CD14-positive monocyte (primary cell): ENCODE measurements at regions of chr10 and their contacts with region 1.

Region 1: GRCh38 chr10:11515596-11516430 is 95.6 kb downstream of the USP6NL start:
- DNase-seq: peak; percentile 53 to 72 (median 67)
- H3K4me3 ChIP-seq: no peak overlapping the region
- H3K4me3 Mint-ChIP-seq: no peak overlapping the region
- H3K27ac ChIP-seq: no peak overlapping the region
- H3K27ac Mint-ChIP-seq: no peak overlapping the region
- H3K4me1 ChIP-seq: no peaks in the 10 kb centered on the region
- H3K4me1 Mint-ChIP-seq: peaks cover 12% of the 10 kb centered on the region
- H3K27me3 ChIP-seq: no peaks in the 10 kb centered on the region
- H3K27me3 Mint-ChIP-seq: peaks cover 0 to 3% (median 3%) of the 10 kb centered on the region in 3 donors
- CTCF ChIP-seq: peak; percentile 86

Region 2: DNA sequence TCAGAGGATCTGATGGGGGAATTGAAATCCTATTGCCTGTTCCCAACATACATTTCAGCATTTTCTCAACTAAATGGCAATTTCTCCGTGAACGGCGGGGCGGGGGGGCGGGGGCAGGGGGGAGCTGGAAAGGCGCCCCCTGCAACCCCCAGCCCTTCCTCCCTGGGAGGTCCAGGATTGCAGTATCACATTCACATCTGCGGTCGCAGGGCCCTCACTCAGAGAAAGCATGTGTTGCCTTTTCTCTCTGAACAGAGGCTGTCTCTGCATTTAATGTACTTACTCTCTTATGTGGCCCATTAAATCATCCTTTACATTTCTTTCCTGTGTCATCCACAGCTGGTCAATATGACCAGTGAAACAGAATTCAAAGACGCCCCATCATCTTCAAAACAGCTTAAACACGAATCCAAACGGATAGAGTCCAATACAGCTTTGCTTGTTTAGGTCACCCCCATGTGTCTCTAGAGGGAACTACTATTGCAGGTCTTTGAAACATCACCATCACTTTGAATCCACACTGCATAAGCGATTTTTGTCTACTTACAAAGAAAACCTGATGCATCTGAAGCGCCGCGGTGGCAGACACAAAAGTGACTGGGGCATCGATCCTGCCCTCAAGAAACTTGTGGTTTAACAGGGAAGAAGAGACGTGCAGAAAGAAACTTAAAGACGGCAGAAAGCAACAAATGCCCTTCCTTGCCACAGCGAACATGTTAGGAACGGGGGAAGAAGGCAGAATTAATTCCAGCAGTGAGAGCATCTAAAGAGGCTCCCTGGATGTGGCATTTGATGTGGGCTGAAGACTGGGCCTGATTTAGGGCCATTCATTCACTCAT is 209.3 kb after region 1 on chr10:
- intact Hi-C with region 1: loop called (anchors 5 kb)
- DNase-seq: peak; percentile 27 to 47 (median 39)
- H3K4me3 ChIP-seq: no peak overlapping the region
- H3K4me3 Mint-ChIP-seq: no peak overlapping the region
- H3K27ac ChIP-seq: no peak overlapping the region
- H3K27ac Mint-ChIP-seq: no peak overlapping the region
- H3K4me1 ChIP-seq: peaks cover 12 to 16% of the 10 kb centered on the region in 2 donors
- H3K4me1 Mint-ChIP-seq: peaks cover 21% of the 10 kb centered on the region
- H3K27me3 ChIP-seq: no peaks in the 10 kb centered on the region
- H3K27me3 Mint-ChIP-seq: peaks cover 0 to 8% (median 3%) of the 10 kb centered on the region in 3 donors
- CTCF ChIP-seq: peak; percentile 83

Region 3: GRCh38 chr10:11757821-11758463 is 242.1 kb after region 1 on chr10:
- intact Hi-C with region 1: loop called (anchors 1 to 2 kb)
- DNase-seq: peak; percentile 67 to 75 (median 73)
- H3K4me3 ChIP-seq: no peak overlapping the region
- H3K4me3 Mint-ChIP-seq: no peak overlapping the region
- H3K27ac ChIP-seq: no peak overlapping the region
- H3K27ac Mint-ChIP-seq: peak overlapping the region in 1 of 7 donors; percentile 37
- H3K4me1 ChIP-seq: no peaks in the 10 kb centered on the region
- H3K4me1 Mint-ChIP-seq: peaks cover 4% of the 10 kb centered on the region
- H3K27me3 ChIP-seq: no peaks in the 10 kb centered on the region
- H3K27me3 Mint-ChIP-seq: peaks cover 0 to 3% (median 0%) of the 10 kb centered on the region in 3 donors
- CTCF ChIP-seq: peak; percentile 90